ENCODE measurements at regions of chr6 and their contacts with region 1.

Region 1: DNA sequence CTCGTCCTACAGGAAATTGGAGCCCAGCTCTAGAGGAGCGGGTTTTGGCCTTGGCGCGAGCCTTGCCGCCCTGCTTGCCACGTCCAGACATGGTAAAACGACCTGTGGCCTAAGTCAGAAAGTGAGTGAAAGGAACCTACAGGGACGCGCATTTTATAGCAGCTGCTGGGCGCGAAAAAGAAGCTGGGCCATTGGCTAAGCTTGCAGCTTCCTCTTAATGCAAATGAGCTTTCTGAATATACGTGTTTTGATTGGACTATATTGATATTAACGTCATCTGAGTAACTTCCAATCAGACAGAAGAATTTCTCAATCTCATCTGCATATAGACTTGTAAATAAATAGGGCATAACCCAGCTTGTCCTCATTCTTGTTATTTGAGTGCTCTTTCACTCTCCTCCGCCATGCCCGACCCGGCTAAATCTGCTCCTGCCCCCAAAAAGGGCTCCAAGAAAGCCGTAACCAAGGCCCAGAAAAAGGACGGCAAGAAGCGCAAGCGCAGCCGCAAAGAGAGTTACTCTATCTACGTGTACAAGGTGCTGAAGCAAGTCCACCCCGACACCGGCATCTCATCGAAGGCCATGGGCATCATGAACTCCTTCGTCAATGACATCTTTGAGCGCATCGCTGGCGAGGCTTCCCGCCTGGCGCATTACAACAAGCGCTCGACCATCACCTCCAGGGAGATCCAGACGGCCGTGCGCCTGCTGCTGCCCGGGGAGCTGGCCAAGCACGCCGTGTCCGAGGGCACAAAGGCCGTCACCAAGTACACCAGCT is 18.9 kb downstream of the OR2B2 start:
- DNase-seq: peak; percentile 90

Region 2: DNA sequence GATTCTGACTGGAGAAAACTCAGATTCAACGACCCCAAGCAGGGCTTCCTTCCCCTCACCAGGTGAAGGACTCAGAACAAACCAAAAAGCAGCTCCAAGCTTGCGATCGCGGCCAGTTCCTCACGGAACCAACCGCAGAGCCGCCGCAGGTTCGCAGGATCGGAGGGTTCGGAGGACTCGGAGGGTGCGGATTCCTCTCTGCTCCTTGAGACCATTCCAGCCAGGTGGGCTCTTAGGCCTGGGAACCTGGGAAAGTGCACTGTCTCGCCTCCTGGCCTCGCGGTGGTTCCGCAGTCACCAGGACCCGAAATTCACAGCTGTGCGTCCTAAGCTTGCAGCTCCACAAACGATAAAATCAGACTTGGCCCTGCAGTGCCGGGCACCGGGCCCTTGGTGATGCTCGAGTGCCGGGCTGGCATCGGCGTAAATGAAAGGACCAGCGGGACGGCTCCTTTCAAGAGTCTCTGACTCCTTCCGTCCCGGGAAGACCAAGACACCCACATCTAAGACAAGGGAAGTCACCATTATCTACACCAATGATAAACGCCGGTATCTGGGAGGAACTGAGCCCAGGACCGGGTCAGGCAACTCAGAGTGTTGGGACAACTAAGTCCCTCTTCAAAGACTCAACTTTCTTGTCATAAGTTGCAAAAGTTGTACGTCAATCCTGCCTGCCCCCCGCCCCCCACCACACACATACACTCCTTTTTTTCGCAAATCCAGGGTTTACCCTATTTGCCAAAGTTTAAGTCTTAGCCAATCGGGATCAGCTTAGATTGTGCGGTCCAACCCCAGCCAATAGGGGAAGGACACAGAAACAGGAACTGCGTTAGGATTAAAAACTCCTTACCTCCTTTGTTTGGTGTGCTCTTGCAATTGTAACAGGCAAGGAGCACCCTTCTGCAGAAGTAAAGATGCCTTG is 715.5 kb before region 1 on chr6:
- intact Hi-C with region 1: loop called (anchors 5 to 10 kb)
- DNase-seq: peak; percentile 95

Region 3: DNA sequence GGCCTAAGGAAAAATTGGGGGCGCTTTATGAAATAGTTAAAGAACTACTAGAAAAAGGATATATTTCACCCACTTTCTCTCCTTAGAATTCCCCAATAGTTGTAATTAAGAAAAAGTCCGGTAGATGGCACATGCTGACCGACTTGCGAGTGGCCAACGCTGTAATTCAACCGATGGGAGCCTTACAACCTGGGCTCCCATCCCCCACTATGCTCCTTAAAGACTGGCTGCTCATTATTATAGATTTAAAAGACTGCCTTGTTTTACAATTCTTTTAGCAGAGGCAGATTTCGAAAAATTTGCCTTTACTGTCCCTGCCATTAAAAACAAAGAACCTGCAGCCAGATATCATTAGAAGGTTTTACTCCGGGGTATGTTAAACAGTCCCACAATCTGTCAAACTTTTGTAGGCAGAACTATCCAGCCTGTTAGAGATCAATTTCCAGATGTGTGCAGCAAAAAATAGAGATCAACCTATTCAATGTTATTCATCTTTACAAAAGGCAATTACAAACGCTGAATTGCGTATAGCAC is 704.3 kb before region 1 on chr6:
- intact Hi-C with region 1: loop called in 1 of 2 experiments (anchors 10 kb)
- DNase-seq: no peak

Region 4: DNA sequence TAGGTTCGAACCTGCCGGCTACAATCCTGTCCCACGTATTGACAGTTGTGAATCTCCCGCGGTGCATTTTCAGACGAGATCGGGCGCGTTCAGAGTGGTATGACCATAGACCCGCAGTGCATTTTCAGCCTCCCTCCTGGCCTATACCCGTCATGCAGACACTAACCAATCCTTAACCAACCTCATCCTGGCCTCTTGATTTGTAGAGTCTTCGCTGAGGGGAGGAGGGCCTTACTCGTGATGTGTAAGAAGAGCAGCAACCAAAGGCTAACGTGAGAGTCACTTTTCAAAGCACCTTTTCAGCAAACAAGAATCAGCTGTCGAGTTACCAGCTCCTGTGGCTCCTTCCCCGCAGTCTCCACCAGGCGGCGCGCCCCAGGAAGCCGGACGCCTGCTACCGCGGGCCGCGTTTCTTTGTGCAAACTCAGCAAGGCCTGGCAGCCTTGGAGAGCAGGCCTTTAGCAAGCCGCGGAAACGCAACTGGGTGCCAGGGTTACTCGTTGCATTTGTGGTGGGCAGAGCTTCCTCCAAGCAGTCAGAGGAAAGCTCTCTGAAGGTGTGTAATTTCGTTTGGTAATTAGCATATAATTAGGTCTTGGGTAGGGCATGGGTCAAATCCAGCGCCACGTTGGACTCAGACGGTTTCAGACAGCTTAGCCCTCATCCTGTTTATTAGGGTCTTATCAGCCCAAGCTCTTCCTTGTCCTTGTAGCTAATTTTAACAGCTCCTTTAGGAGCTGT is 120.8 kb before region 1 on chr6:
- intact Hi-C with region 1: loop called in 1 of 2 experiments (anchors 5 kb)
- DNase-seq: peak; percentile 96

Measured in posterior vena cava (tissue), 2 donors.